Calu3 (cell line): ENCODE measurements at regions of chr10 and their contacts with region 1.

Region 1: DNA sequence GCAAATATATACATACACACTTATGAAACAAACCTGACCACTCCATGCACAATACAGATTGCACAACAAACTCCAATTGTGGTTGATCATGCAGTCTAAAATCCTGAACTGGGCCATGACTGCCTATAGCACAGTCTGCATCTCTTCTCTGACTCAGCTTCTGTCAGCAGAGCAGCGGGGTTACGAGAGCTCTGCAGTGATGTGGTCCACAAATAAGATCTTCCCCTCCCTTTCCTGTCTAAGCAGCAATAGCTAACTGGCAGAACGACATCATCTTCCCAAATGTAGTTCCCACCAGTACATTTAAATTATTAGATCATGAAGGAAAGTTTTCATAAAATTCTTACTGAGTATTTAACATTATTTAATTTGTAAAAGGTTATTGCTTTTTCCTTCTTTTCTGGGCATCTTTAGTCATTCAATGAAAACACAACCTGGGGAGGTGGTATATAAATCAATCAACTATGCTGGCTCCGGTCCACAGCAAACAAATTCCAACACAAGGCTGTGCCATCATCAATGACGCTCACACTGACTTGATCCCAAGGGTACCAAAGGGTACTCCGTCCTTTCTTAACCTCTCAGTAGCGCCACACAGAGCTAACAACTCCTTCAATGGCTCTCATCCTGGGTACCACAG is 17.1 kb downstream of the ARHGAP21 start:
- DNase-seq: peak; percentile 40
- H3K4me3 Mint-ChIP-seq: no peak overlapping the region
- H3K27ac Mint-ChIP-seq: no peak overlapping the region
- H3K4me1 Mint-ChIP-seq: peaks cover 19% of the 10 kb centered on the region
- H3K27me3 Mint-ChIP-seq: no peaks in the 10 kb centered on the region
- CTCF ChIP-seq: no peak

Region 2: GRCh38 chr10:24826019-24826418 is 119.4 kb after region 1 on chr10:
- CTCF ChIA-PET with region 1: no interaction called
- intact Hi-C with region 1: no loop called
- DNase-seq: no peak
- H3K4me3 Mint-ChIP-seq: peak overlapping the region; percentile 10
- H3K27ac Mint-ChIP-seq: no peak overlapping the region
- H3K4me1 Mint-ChIP-seq: peaks cover 11% of the 10 kb centered on the region
- H3K27me3 Mint-ChIP-seq: no peaks in the 10 kb centered on the region
- CTCF ChIP-seq: no peak

Region 3: DNA sequence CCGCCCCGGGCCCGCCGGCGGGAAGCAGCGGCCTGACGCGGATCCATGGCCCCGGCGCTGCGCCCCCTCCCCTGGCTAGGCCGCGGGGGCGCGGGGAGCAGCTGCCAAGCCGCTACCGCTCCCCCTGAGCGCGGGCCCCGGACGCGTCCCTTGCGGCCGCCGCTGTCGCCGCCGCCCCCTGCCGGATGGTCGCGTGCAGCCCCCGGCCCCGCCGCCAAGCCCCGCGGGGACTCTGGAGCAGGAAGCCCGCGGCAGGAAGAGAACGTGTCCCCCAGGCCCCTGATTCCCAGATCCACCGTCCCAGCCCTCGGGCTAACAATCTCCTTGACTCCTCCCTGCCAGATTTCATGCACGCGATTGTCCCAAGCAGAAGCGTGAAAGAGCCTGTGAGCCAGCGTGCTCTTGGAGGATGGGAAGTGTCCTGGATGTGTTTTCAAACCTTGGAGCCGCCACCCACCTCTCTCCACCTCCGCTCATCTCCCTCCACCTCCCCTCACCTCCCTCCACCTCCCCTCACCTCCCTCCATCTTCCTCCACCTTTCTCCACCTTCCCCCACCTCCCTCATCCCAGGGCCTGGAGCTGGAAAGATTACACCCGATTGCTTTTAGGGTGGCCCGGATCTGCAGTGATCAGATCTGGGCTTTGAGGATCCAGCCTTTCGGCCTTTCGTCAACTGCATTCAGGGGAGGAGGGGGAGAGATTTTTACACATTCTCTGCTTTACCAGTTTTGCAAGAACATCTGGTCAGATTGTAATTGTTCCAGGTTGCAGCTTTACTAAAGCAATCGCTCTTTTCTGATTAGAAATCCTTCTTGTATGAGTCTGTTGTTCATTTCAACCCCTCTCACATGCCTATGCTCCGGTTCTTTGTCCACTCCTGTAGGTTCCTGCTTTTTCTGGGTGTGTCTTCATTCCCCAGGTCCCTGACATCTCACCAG is 246.4 kb after region 1 on chr10:
- CTCF ChIA-PET with region 1: no interaction called
- intact Hi-C with region 1: loop called (anchors 5 kb)
- DNase-seq: peak; percentile 71
- H3K4me3 Mint-ChIP-seq: peak overlapping the region; percentile 67
- H3K27ac Mint-ChIP-seq: peak overlapping the region; percentile 88
- H3K4me1 Mint-ChIP-seq: peaks cover 47% of the 10 kb centered on the region
- H3K27me3 Mint-ChIP-seq: no peaks in the 10 kb centered on the region
- CTCF ChIP-seq: peak; percentile 60